Activated CD4-positive, alpha-beta T cell treated with anti-CD3 and anti-CD28 coated beads, Interleukin-2, amount 10 ng/mL, durations not matched to agents 24 days and 14 days (primary cell): ENCODE measurements at regions of chr2 and their contacts with region 1.

Region 1: DNA sequence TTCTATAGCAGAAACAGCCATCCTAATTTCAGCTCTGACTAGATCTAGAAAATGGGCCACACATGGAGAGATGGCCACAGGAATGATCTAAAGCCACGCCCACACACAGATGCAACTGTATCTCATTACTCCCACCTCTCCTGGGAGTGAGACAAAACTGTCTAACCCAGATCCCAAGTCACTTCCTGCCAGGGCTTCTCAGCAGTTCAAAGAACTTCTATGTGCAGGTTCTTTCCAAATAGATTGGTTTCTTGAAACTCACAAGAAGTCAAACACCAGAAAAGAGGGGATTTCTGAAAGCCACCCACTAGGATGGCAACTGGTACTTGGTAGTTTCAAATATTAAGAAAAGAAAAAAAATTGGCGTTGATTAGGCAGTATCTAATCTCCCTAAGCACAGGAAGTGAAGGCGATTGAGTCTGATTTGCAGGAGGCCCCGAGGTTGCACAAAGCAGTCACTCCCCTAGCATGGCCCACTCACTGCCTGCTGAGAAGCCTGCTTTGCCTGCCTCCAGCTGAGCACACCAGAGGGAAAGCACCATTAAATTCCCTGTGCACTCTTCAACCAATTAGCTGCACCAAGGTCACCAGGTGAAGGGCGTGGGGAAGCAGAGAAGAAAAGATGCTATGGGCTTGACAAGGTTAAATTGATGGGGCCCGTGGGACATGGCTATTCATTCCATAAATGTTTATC is 51.1 kb downstream of the PAPOLG start:
- DNase-seq: peak; percentile 72
- H3K4me3 Mint-ChIP-seq: peak overlapping the region; percentile 56
- H3K27ac Mint-ChIP-seq: peak overlapping the region; percentile 87
- H3K4me1 Mint-ChIP-seq: peaks cover 46% of the 10 kb centered on the region
- H3K27me3 Mint-ChIP-seq: no peaks in the 10 kb centered on the region

Region 2: GRCh38 chr2:60275958-60276357 is 531.2 kb before region 1 on chr2:
- intact Hi-C with region 1: no loop called
- DNase-seq: no peak
- H3K4me3 Mint-ChIP-seq: no peak overlapping the region
- H3K27ac Mint-ChIP-seq: no peak overlapping the region
- H3K4me1 Mint-ChIP-seq: no peaks in the 10 kb centered on the region
- H3K27me3 Mint-ChIP-seq: no peaks in the 10 kb centered on the region

Region 3: GRCh38 chr2:60756191-60757041 is 50.7 kb before region 1 on chr2 and contains the start of gene PAPOLG:
- intact Hi-C with region 1: loop called (anchors 5 kb)
- DNase-seq: peak; percentile 99
- H3K4me3 Mint-ChIP-seq: peak within 1 kb of the TSS; percentile 97
- H3K27ac Mint-ChIP-seq: peak within 1 kb of the TSS; percentile 99
- H3K4me1 Mint-ChIP-seq: peaks cover 29% of the 10 kb centered on the region
- H3K27me3 Mint-ChIP-seq: no peaks in the 10 kb centered on the region
- total RNA-seq, gene PAPOLG: 18.1 and 21.6 TPM in 2 replicates

Region 4: DNA sequence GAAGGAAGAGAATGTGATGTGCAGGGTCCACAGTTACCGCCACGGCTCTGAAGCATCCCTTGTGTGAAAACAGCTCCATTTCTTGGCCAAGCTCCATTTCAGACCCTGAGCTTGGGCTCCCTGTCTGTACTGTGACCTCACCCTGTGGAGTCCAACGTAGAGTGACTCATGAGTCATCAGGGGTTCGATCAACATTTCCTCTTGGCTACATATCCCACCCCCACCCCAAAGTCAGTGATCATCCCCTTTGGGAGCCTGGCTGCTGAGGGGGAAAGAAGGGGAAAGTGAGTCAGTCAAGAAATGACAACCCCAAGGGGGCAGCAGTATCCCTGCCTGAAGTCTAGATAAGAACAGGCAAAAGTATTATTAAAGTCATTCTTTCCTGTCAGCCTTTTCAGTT is 11.1 kb after region 1 on chr2:
- intact Hi-C with region 1: loop called (anchors 1 kb)
- DNase-seq: no peak
- H3K4me3 Mint-ChIP-seq: peak overlapping the region; percentile 61
- H3K27ac Mint-ChIP-seq: peak overlapping the region; percentile 91
- H3K4me1 Mint-ChIP-seq: peaks cover 51% of the 10 kb centered on the region
- H3K27me3 Mint-ChIP-seq: no peaks in the 10 kb centered on the region

Region 5: DNA sequence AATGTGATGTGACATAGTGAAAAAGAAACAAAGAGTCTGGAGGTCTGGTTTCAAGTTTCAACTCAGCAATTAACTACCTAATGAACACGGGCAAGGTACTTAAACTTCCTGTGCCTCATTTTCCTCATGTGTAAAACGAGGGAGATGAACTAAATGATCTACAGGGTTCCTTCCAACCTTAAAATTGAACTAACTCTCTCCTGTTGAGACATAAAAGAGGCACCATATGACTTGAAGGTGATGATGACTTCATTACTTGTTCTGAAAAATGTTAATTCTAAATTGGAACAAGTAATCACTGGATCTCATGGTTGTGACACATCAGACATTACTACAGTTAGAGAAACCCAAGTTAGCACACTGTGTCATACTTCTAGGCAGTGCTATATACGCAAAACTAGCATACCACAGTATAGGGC is 65.4 kb after region 1 on chr2:
- intact Hi-C with region 1: loop called (anchors 1 kb)
- DNase-seq: no peak
- H3K4me3 Mint-ChIP-seq: no peak overlapping the region
- H3K27ac Mint-ChIP-seq: peak overlapping the region; percentile 51
- H3K4me1 Mint-ChIP-seq: peaks cover 22% of the 10 kb centered on the region
- H3K27me3 Mint-ChIP-seq: no peaks in the 10 kb centered on the region

Region 6: DNA sequence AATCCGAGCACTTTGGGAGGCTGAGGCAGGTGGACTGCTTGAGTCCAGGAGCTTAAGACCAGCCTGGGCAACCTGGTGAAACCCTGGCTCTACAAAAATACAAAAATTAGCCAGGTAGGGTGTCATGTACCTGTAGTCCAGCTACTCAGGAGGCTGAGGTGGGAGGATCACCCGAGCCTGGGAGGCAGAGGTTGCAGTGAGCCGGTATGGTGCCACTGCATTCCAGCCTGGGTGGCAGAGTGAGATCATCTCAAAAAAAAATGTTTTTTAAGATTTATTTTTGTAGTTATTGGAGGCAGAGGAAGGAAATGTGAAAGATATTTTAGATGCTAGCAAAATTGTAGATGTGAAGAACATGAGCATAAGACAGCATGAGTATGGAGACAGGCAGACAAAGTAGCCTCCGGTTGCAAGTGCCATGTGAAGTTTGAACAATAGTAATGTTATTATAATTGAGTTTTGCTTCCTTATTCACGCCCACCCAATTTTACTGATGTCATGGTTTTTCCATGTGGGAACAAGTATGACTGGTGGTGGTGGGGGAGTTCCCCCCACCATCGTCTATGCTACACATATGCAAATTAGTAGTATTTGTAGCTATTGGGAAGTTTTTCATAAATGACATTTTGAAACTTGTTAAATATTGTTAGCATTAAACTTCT is 92.2 kb after region 1 on chr2:
- intact Hi-C with region 1: loop called (anchors 1 kb)
- DNase-seq: no peak
- H3K4me3 Mint-ChIP-seq: peak overlapping the region; percentile 58
- H3K27ac Mint-ChIP-seq: peak overlapping the region; percentile 90
- H3K4me1 Mint-ChIP-seq: peaks cover 37% of the 10 kb centered on the region
- H3K27me3 Mint-ChIP-seq: no peaks in the 10 kb centered on the region

Region 7: DNA sequence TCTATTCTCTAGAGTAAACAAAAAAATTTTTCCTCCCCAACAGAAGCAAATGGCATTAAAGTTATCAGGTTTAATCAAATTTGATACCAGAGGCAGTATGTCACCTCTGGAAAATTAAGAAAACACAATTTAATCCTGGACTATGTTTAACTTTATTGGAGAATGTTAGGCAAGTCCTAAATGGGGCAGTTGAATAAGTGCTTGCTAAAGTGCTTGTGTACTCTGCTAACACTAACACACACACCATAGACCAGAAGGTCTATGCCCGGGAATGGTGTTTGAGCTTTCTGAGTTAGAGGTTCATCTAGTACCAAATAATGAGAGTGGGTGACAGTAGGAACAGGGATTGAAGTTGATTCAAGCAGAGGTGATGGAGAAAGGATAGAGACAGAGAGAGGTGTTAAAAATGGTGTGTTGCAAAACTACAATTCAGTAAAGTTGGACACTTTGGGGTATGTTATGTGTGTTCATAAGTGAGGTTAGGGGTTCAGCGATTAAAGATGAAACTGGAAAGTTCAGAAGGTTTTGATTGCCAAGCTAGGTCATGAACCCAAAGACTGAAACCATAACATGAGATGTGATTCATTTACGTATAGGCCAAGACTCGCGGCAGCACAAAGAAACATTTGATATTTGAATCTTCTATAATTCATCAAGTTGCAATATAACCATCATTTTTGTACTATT is 169.9 kb after region 1 on chr2:
- intact Hi-C with region 1: loop called (anchors 1 kb)
- DNase-seq: no peak
- H3K4me3 Mint-ChIP-seq: no peak overlapping the region
- H3K27ac Mint-ChIP-seq: peak overlapping the region; percentile 46
- H3K4me1 Mint-ChIP-seq: peaks cover 30% of the 10 kb centered on the region
- H3K27me3 Mint-ChIP-seq: no peaks in the 10 kb centered on the region

Region 8: DNA sequence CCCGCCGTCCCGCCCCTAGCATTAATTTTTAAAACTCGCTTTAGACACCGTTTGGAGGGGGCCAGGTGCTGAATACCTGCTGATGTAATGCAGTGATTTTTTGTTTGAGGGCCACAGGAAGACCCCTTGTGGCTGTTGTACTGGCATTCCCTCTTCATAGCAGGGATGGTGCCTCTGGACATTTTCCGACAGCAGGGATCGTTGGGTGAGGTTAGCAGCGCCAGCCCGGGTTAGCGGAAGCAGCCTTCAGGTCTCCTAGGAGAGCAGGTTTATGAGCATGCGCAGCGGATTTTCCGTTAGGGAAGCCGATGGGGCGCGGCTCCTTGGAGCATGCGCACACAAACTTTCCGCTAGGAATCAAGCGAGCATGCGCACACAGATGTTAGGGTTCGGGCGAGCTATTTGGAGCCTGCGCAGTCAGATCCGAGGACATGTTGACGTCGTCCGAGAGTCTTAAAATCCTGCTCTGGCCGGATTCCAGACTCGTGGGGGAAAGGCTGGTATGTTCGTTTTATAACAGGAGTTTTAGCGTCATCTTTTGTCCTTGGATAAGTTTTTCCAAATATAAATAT is 337.6 kb after region 1 on chr2:
- intact Hi-C with region 1: loop called (anchors 2 kb)
- DNase-seq: peak; percentile 98
- H3K4me3 Mint-ChIP-seq: peak overlapping the region; percentile 88
- H3K27ac Mint-ChIP-seq: peak overlapping the region; percentile 88
- H3K4me1 Mint-ChIP-seq: peaks cover 6% of the 10 kb centered on the region
- H3K27me3 Mint-ChIP-seq: peaks cover 2% of the 10 kb centered on the region

Region 9: DNA sequence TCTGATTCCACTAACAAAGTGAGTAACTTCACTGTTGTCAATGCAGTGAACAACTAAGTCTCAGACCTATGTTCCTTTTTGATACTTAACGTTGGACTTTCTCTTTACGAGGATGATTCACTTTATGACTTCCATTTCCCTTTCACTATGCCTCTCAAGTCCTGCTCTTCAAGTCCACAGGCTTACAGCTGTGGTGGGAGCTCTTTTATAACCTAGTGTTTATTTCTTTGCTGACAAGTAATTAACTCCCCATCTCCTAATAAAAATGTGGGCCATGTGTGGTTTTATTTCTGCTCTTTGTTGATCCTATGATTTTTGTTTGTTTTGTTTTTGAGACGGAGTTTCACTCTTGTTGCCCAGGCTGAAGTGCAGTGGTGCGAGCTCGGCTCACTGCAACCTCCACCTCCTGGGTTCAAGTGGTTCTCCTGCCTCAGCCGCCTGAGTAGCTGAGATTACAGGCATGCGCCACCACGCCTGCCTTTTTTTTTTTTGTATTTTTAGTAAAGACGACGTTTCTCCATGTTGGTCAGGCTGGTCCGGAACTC is 521.6 kb after region 1 on chr2:
- intact Hi-C with region 1: no loop called
- DNase-seq: peak; percentile 54
- H3K4me3 Mint-ChIP-seq: peak overlapping the region; percentile 53
- H3K27ac Mint-ChIP-seq: peak overlapping the region; percentile 78
- H3K4me1 Mint-ChIP-seq: peaks cover 19% of the 10 kb centered on the region
- H3K27me3 Mint-ChIP-seq: no peaks in the 10 kb centered on the region